Panc1 (cell line): ENCODE measurements at regions of chr1 and their contacts with region 1.

Region 1: DNA sequence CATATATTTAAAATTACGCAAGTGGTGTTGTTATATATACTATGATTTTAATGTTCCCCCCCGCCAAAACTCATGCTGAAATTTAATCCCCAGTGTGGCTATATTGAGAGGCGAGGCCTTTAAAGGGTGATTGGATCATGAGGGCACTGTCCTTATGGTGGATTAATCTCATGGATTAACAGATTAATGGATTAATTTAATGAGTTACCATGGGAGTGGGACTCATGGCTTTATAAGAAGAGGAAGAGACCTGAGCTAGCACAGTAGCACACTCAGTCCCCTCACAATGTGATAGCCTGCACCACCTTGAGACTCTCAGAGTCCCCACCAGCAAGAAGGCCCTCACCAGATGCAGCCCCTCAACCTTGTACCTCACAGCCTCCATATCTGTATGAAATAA is 34.8 kb downstream of the C1orf198 start:
- DNase-seq: no peak
- ATAC-seq: no peak
- H3K4me3 ChIP-seq: no peak overlapping the region
- H3K27ac ChIP-seq: no peak overlapping the region
- H3K4me1 ChIP-seq: no peaks in the 10 kb centered on the region
- H3K27me3 ChIP-seq: no peaks in the 10 kb centered on the region
- CTCF ChIP-seq: no peak

Region 2: GRCh38 chr1:230375780-230376179 is 457.7 kb before region 1 on chr1:
- CTCF ChIA-PET with region 1: no interaction called
- POLR2A ChIA-PET with region 1: no interaction called
- in situ Hi-C with region 1: no loop called
- intact Hi-C with region 1: no loop called
- DNase-seq: no peak
- ATAC-seq: no peak
- H3K4me3 ChIP-seq: no peak overlapping the region
- H3K27ac ChIP-seq: no peak overlapping the region
- H3K4me1 ChIP-seq: no peaks in the 10 kb centered on the region
- H3K27me3 ChIP-seq: peaks cover 16% of the 10 kb centered on the region
- CTCF ChIP-seq: no peak

Region 3: DNA sequence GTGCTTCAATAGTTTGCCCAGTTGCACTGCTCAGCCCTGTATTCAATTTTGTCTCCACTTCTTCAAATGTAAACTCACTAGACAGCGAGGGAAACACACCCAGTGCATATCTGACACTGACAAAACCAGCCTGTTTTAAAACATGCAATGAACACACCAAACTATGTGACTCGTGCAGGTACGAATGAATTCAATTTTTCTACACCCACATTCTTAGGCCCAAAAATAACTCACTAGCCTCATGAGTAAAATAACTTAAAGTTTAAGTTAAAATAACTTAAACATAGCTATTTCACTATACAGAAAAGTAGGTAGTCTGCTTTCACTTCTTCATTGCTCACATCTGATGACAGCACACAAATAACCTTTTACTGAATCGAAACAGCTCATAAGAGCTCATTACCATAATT is 124.1 kb after region 1 on chr1:
- CTCF ChIA-PET with region 1: no interaction called
- POLR2A ChIA-PET with region 1: no interaction called
- in situ Hi-C with region 1: no loop called
- intact Hi-C with region 1: no loop called
- DNase-seq: no peak
- ATAC-seq: no peak
- H3K4me3 ChIP-seq: no peak overlapping the region
- H3K27ac ChIP-seq: no peak overlapping the region
- H3K4me1 ChIP-seq: no peaks in the 10 kb centered on the region
- H3K27me3 ChIP-seq: no peaks in the 10 kb centered on the region
- CTCF ChIP-seq: no peak

Region 4: DNA sequence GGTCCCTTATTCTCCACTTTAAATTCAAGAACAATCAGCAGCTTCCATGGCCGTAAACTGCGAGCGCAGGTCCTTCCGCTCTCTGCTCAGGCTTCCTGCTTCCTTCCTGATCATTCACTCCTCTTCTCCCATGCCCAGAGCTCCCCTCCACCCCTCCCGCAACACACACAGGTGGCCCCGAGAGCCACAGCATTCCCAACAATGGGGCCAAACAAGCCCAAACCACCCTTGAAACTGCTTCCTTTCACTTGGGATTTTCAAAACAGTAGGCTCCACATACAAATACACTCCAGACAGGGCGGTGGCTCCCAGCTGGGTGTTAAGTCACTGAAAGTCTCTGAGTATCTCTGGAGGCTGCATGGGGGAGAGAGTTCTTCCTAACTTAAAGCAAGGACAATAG is 195.2 kb after region 1 on chr1:
- CTCF ChIA-PET with region 1: no interaction called
- POLR2A ChIA-PET with region 1: no interaction called
- in situ Hi-C with region 1: no loop called
- intact Hi-C with region 1: no loop called
- DNase-seq: no peak
- ATAC-seq: no peak
- H3K4me3 ChIP-seq: no peak overlapping the region
- H3K27ac ChIP-seq: no peak overlapping the region
- H3K4me1 ChIP-seq: no peaks in the 10 kb centered on the region; the same call in 1 of the 2 replicates
- H3K27me3 ChIP-seq: no peaks in the 10 kb centered on the region; the same call in 1 of the 2 replicates
- CTCF ChIP-seq: no peak

Region 5: DNA sequence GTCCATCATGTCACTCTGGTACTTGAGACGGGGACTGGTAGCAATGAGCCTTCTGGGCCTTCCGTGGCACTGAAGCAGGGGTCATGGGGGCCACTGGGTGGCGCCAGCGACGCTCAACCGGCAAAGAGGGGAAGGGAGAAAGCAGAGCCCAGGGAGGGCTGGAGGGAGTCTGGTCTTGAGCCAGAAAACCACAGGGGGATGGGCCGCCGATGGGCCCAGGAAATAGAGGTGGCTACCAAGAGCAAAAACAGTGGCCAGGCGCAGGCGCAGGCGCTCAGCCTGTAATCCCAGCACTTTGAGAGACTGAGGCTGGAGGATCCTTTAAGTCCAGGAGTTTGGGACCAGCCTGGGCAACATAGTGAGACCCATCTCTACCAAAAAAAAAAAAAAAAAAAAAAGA is 482.4 kb after region 1 on chr1:
- CTCF ChIA-PET with region 1: no interaction called
- POLR2A ChIA-PET with region 1: interaction called, 10 read pairs
- in situ Hi-C with region 1: no loop called
- intact Hi-C with region 1: no loop called
- DNase-seq: peak; percentile 18
- ATAC-seq: peak; percentile 85
- H3K4me3 ChIP-seq: no peak overlapping the region
- H3K27ac ChIP-seq: no peak overlapping the region
- H3K4me1 ChIP-seq: no peaks in the 10 kb centered on the region
- H3K27me3 ChIP-seq: no peaks in the 10 kb centered on the region
- CTCF ChIP-seq: peak; percentile 81